ENCODE measurements at regions of chr3 and their contacts with region 1.

Region 1: GRCh38 chr3:148309390-148310035 is 388.2 kb upstream of the AGTR1 start:
- DNase-seq: peak; percentile 43 to 47
- H3K4me3 ChIP-seq: no peak overlapping the region
- H3K4me3 Mint-ChIP-seq: no peak overlapping the region
- H3K27ac Mint-ChIP-seq: no peak overlapping the region
- H3K4me1 ChIP-seq: no peaks in the 10 kb centered on the region
- H3K4me1 Mint-ChIP-seq: no peaks in the 10 kb centered on the region
- H3K27me3 ChIP-seq: no peaks in the 10 kb centered on the region
- H3K27me3 Mint-ChIP-seq: no peaks in the 10 kb centered on the region
- CTCF ChIP-seq: peak; percentile 69 to 75

Region 2: DNA sequence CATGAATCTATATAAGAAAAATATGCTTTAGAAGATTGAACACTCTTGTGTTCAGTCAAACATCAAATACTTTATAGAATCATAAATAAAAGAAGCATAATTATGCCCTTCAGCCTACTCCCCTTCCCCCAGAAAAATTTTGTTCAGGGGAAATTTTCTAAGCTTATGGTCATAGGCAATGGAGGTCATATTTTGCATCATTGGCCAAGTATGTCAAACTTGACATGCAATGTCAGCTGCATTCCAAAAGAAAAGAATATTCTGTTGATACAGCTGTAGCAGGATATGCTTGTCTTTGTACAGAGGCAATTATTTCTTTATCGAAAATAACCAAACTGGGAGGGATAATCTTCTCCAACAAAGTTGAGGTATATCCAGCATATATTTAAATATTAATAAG is 572.1 kb before region 1 on chr3:
- CTCF ChIA-PET with region 1: no interaction called
- POLR2A ChIA-PET with region 1: no interaction called
- intact Hi-C with region 1: no loop called
- DNase-seq: no peak
- H3K4me3 ChIP-seq: no peak overlapping the region
- H3K4me3 Mint-ChIP-seq: no peak overlapping the region
- H3K27ac Mint-ChIP-seq: no peak overlapping the region
- H3K4me1 ChIP-seq: no peaks in the 10 kb centered on the region
- H3K4me1 Mint-ChIP-seq: no peaks in the 10 kb centered on the region
- H3K27me3 ChIP-seq: no peaks in the 10 kb centered on the region
- H3K27me3 Mint-ChIP-seq: no peaks in the 10 kb centered on the region
- CTCF ChIP-seq: no peak

Region 3: GRCh38 chr3:148280623-148281242 is 28.8 kb before region 1 on chr3:
- CTCF ChIA-PET with region 1: no interaction called
- POLR2A ChIA-PET with region 1: no interaction called
- intact Hi-C with region 1: no loop called
- DNase-seq: no peak
- H3K4me3 ChIP-seq: no peak overlapping the region
- H3K4me3 Mint-ChIP-seq: no peak overlapping the region
- H3K27ac Mint-ChIP-seq: no peak overlapping the region
- H3K4me1 ChIP-seq: no peaks in the 10 kb centered on the region
- H3K4me1 Mint-ChIP-seq: no peaks in the 10 kb centered on the region
- H3K27me3 ChIP-seq: no peaks in the 10 kb centered on the region
- H3K27me3 Mint-ChIP-seq: no peaks in the 10 kb centered on the region
- CTCF ChIP-seq: no peak

Region 4: GRCh38 chr3:148366743-148367410 is 57.4 kb after region 1 on chr3:
- CTCF ChIA-PET with region 1: no interaction called
- POLR2A ChIA-PET with region 1: no interaction called
- intact Hi-C with region 1: loop called (anchors 1 kb)
- DNase-seq: no peak
- H3K4me3 ChIP-seq: no peak overlapping the region
- H3K4me3 Mint-ChIP-seq: no peak overlapping the region
- H3K27ac Mint-ChIP-seq: no peak overlapping the region
- H3K4me1 ChIP-seq: no peaks in the 10 kb centered on the region
- H3K4me1 Mint-ChIP-seq: no peaks in the 10 kb centered on the region
- H3K27me3 ChIP-seq: no peaks in the 10 kb centered on the region; the same call in 1 of the 2 replicates
- H3K27me3 Mint-ChIP-seq: peaks cover 7% of the 10 kb centered on the region
- CTCF ChIP-seq: no peak

Region 5: GRCh38 chr3:148459931-148460513 is 150.5 kb after region 1 on chr3:
- CTCF ChIA-PET with region 1: no interaction called
- POLR2A ChIA-PET with region 1: no interaction called
- intact Hi-C with region 1: loop called (anchors 1 kb)
- DNase-seq: no peak
- H3K4me3 ChIP-seq: no peak overlapping the region
- H3K4me3 Mint-ChIP-seq: no peak overlapping the region
- H3K27ac Mint-ChIP-seq: no peak overlapping the region
- H3K4me1 ChIP-seq: no peaks in the 10 kb centered on the region
- H3K4me1 Mint-ChIP-seq: no peaks in the 10 kb centered on the region
- H3K27me3 ChIP-seq: no peaks in the 10 kb centered on the region
- H3K27me3 Mint-ChIP-seq: no peaks in the 10 kb centered on the region
- CTCF ChIP-seq: peak in 1 of 2 experiments; percentile 41

Region 6: DNA sequence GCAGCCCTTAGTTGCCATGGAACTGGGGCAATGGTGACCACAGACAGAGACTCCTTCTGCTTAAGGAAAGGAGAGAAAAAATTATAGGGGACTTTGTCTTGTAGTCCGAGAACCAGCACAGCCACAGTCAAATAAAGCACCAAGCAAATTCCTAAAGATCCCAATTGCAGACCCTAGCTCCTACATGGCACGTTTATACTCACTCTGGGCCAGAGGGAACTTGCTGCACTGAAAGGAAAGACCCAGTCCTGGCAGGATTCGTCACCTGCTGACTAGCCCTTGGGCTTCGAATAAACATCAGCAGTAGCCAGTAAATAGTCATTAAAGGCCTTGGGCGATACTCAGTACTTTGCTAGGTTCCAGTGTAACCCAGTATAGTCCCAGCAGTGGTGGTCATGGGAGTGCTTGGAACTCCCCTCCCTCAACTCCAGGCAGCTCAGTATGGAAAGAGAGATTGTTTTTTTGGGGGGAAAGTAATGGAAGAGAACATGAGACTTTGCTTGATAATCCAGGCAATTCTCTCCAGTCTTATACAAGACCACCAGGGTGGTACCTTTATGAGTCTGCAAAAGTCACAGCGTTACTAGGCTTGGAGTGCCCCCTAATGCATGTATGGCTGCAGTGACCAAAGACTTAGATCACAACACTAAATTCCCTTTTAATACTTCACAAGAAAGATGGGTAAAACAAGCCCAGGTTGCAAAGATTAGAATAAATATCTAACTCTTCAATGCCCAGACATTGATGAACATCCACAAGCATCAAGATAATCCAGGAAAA is 321.8 kb after region 1 on chr3:
- CTCF ChIA-PET with region 1: no interaction called
- POLR2A ChIA-PET with region 1: no interaction called
- intact Hi-C with region 1: loop called (anchors 1 kb)
- DNase-seq: peak in 1 of 2 experiments; percentile 41
- H3K4me3 ChIP-seq: no peak overlapping the region
- H3K4me3 Mint-ChIP-seq: no peak overlapping the region
- H3K27ac Mint-ChIP-seq: no peak overlapping the region
- H3K4me1 ChIP-seq: peaks cover 7% of the 10 kb centered on the region; the same call in 1 of the 2 replicates
- H3K4me1 Mint-ChIP-seq: peaks cover 7% of the 10 kb centered on the region
- H3K27me3 ChIP-seq: no peaks in the 10 kb centered on the region
- H3K27me3 Mint-ChIP-seq: no peaks in the 10 kb centered on the region
- CTCF ChIP-seq: peak; percentile 57 to 58

Region 7: DNA sequence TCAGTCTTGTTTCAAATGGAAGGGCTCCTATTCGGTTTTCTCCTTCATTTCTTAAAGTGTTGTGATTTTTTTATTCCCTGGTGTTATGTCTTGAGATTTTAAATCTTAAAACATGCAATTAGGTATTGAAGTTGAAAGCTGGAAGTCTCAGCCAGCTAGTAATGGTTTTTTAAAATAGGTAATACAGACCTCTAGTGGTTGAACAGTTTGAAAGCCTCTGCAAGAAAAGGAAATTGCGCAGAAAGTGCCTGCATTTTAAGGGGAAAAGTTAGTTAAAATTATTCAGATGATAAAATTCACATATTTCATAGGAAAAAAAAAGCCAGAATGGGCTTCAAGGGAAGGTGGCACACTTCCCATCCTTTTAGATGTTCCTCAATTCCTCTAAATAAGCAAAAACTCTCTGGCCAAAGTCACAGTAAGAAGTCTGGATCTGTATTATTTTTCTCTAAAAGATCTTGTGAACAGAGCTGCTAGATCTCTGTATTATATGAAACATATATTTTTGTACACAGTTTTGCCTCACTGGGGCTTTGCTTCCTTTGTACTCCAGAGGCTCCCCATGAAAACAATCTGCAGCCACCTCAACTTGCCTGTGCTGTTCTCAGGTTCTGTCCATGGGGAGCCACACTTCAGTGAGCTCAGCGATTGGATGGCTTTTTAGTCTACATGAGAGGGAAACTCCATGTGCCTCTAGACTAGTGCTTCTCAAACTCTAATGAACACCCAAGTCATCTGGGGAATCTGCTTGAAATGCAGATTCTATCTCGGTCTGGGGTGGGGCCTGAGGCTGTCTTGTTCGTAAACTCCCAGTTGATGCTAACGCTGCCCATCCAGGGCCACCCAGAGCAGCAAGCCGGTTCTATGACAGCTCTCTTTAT is 409.7 kb after region 1 on chr3:
- CTCF ChIA-PET with region 1: no interaction called
- POLR2A ChIA-PET with region 1: no interaction called
- intact Hi-C with region 1: loop called (anchors 1 kb)
- DNase-seq: no peak
- H3K4me3 ChIP-seq: no peak overlapping the region
- H3K4me3 Mint-ChIP-seq: no peak overlapping the region
- H3K27ac Mint-ChIP-seq: no peak overlapping the region
- H3K4me1 ChIP-seq: no peaks in the 10 kb centered on the region
- H3K4me1 Mint-ChIP-seq: no peaks in the 10 kb centered on the region
- H3K27me3 ChIP-seq: no peaks in the 10 kb centered on the region
- H3K27me3 Mint-ChIP-seq: no peaks in the 10 kb centered on the region
- CTCF ChIP-seq: peak; percentile 36 to 62